CD4-positive, alpha-beta T cell (primary cell): ENCODE measurements at regions of chr10 and their contacts with region 1.

Region 1: GRCh38 chr10:95656291-95657164 is at the start of gene ALDH18A1:
- DNase-seq: peak; percentile 79 to 95 (median 90)
- ATAC-seq: peak; percentile 90
- H3K4me3 ChIP-seq: peak within 1 kb of the TSS; percentile 70
- H3K4me3 Mint-ChIP-seq: peak within 1 kb of the TSS; percentile 100
- H3K27ac ChIP-seq: peak within 1 kb of the TSS in 1 of 2 donors; percentile 16
- H3K27ac Mint-ChIP-seq: peak within 1 kb of the TSS; percentile 86
- H3K4me1 ChIP-seq: peaks cover 18% of the 10 kb centered on the region
- H3K4me1 Mint-ChIP-seq: peaks cover 39% of the 10 kb centered on the region
- H3K27me3 ChIP-seq: no peaks in the 10 kb centered on the region
- H3K27me3 Mint-ChIP-seq: no peaks in the 10 kb centered on the region
- CTCF ChIP-seq: no peak
- total RNA-seq, gene ALDH18A1: 9.6 to 12.6 TPM

Region 2: DNA sequence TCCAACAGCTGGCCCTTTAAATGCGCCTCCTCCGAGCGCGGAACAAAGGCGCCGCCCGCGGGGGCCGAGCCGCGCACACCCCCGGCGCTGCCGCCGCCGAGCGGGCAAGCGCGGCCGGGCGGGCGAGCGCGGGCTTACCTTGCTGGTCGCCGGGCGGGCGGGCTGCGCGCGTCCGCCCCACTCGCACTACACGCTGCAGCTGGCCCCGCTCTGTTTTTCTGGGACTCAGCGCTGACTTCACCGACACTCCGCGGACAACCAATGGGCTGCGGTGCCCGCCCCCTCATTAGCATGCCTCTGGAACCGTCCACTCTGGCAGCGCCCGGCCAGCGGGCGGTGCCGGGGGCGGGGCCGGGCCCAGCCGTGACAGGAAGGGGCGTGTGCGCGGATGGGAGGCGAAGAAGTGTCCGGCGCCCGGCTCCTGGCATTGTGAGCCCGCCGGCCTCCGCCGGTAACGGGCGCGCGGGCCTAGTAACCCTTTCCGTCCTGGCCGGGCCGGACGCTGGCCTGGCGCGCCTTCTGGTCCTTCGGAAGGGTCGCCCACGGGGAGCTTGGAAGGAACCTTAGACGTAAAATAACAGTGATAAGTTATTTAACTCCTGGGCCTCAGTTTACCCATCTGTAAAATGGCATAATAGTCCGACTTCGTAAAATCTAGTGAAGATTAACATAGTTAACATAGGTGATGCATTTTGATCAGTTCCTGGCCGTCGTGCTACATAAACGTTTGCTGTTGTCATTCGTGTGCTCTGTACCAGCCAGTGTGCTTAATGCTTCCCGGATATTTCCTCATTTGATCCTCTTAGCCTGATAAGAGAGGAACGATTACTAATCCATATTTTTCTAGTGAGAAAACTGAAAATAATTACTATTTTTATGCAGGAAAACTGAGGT is 95.1 kb before region 1 on chr10 and contains the start of gene SORBS1:
- CTCF ChIA-PET with region 1: no interaction called
- POLR2A ChIA-PET with region 1: no interaction called
- intact Hi-C with region 1: loop called in 1 of 2 experiments (anchors 5 kb)
- DNase-seq: peak; percentile 64 to 95 (median 80)
- ATAC-seq: peak; percentile 98
- H3K4me3 ChIP-seq: peak within 1 kb of the TSS; percentile 96
- H3K4me3 Mint-ChIP-seq: peak within 1 kb of the TSS; percentile 100
- H3K27ac ChIP-seq: no peak within 1 kb of the TSS
- H3K27ac Mint-ChIP-seq: peak within 1 kb of the TSS; percentile 72
- H3K4me1 ChIP-seq: peaks cover 14% of the 10 kb centered on the region
- H3K4me1 Mint-ChIP-seq: peaks cover 16% of the 10 kb centered on the region
- H3K27me3 ChIP-seq: peaks cover 0 to 3% of the 10 kb centered on the region in 2 experiments
- H3K27me3 Mint-ChIP-seq: no peaks in the 10 kb centered on the region
- CTCF ChIP-seq: no peak
- total RNA-seq, gene SORBS1: 1.4 to 1.8 TPM